ENCODE measurements at regions of chr22 and their contacts with region 1.

Region 1: GRCh38 chr22:42901790-42902508 is 44.9 kb upstream of the ARFGAP3 start:
- DNase-seq: no peak
- ATAC-seq: peak in 1 of 2 experiments; percentile 46; a peak in 2 of 6 replicates
- H3K4me3 ChIP-seq: no peak overlapping the region
- H3K27ac ChIP-seq: no peak overlapping the region
- H3K4me1 ChIP-seq: no peaks in the 10 kb centered on the region
- CTCF ChIP-seq: no peak
- EP300 ChIP-seq: no peak
- POLR2A ChIP-seq: no peak
- RAD21 ChIP-seq: 0 out of 5 replicates have a peak, but pooled peaks of 1 of the 2 experiments have one; percentile 15

Region 2: GRCh38 chr22:42919199-42919598 is 17.2 kb after region 1 on chr22:
- CTCF ChIA-PET with region 1: interaction called, 24 read pairs
- POLR2A ChIA-PET with region 1: interaction called, 3 read pairs
- DNase-seq: peak; percentile 22 to 43
- ATAC-seq: no peak
- H3K4me3 ChIP-seq: no peak overlapping the region
- H3K27ac ChIP-seq: peak overlapping the region; percentile 87 to 92; a peak in 5 of 6 replicates
- H3K4me1 ChIP-seq: peaks cover 67% of the 10 kb centered on the region
- CTCF ChIP-seq: no peak
- EP300 ChIP-seq: no peak
- POLR2A ChIP-seq: no peak
- RAD21 ChIP-seq: no peak